ENCODE measurements at regions of chr10 and their contacts with region 1.

Region 1: GRCh38 chr10:119656760-119657159 is 5.6 kb downstream of the BAG3 start:
- DNase-seq: no peak
- ATAC-seq: no peak
- H3K4me3 ChIP-seq: no peak overlapping the region
- H3K4me3 Mint-ChIP-seq: peak overlapping the region in 1 of 3 donors; percentile 97
- H3K27ac ChIP-seq: peak overlapping the region; percentile 20
- H3K27ac Mint-ChIP-seq: peak overlapping the region; percentile 91 to 98
- H3K4me1 ChIP-seq: peaks cover 24 to 52% of the 10 kb centered on the region in 2 experiments
- H3K4me1 Mint-ChIP-seq: peaks cover 69 to 81% (median 77%) of the 10 kb centered on the region in 3 donors
- H3K27me3 ChIP-seq: no peaks in the 10 kb centered on the region
- H3K27me3 Mint-ChIP-seq: no peaks in the 10 kb centered on the region

Region 2: GRCh38 chr10:118927321-118927720 is 729.4 kb before region 1 on chr10:
- CTCF ChIA-PET with region 1: no interaction called
- POLR2A ChIA-PET with region 1: no interaction called
- DNase-seq: no peak
- ATAC-seq: no peak
- H3K4me3 ChIP-seq: no peak overlapping the region
- H3K4me3 Mint-ChIP-seq: no peak overlapping the region
- H3K27ac ChIP-seq: no peak overlapping the region
- H3K27ac Mint-ChIP-seq: no peak overlapping the region
- H3K4me1 ChIP-seq: no peaks in the 10 kb centered on the region
- H3K4me1 Mint-ChIP-seq: no peaks in the 10 kb centered on the region
- H3K27me3 ChIP-seq: peaks cover 0 to 14% of the 10 kb centered on the region in 2 experiments
- H3K27me3 Mint-ChIP-seq: peaks cover 13 to 16% of the 10 kb centered on the region in 2 donors

Region 3: DNA sequence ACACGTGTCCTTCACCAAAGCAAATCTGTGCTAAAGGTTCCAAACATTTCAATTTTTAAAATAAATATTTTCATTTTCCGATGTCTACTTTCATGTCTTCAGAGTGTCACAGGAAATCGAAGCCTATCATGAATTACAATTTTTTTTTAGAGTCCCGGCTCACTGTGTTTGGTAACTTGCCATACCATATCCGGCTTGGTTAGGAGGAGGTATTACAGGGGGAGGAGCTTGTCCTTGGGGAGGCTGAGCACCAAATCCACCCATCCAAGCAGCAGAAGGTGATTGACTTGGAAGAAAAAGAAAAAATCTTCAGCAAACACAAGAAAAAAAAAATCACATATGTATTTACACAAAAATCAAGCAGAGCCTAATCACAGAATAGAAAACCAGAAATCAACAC is 81.3 kb before region 1 on chr10:
- CTCF ChIA-PET with region 1: no interaction called
- POLR2A ChIA-PET with region 1: interaction called in 1 of 2 experiments, 17 read pairs
- DNase-seq: peak in 28 of 35 experiments; percentile 6 to 73 (median 28)
- ATAC-seq: peak; percentile 73 to 94 (median 92)
- H3K4me3 ChIP-seq: no peak overlapping the region
- H3K4me3 Mint-ChIP-seq: peak overlapping the region in 1 of 3 donors; percentile 1
- H3K27ac ChIP-seq: peak overlapping the region; percentile 59
- H3K27ac Mint-ChIP-seq: peak overlapping the region; percentile 88
- H3K4me1 ChIP-seq: no peaks in the 10 kb centered on the region
- H3K4me1 Mint-ChIP-seq: peaks cover 17 to 26% (median 24%) of the 10 kb centered on the region in 3 donors
- H3K27me3 ChIP-seq: no peaks in the 10 kb centered on the region
- H3K27me3 Mint-ChIP-seq: no peaks in the 10 kb centered on the region

Measured in T-cell (primary cell).